ENCODE measurements at regions of chrX and their contacts with region 1.

Region 1: DNA sequence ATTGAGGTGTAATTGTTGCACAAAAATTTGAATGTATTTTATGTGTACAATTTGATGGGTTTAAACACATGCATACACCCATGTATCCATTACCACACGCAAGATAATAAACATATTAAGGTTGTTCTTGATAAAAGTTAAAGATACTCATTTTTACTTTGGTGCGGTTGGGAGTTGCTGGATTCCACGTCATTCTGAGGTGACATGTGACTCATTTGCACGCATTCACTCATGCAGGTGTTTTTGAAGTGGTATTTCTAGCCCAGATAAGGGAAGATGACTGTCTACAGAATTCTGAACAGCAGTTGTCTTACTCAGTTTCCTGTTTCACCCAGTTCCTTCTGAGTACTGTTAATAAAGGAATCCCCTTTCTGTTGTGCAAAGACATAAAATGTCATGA is 142.0 kb downstream of the RTL3 start:
- DNase-seq: peak; percentile 70
- ATAC-seq: peak; percentile 83
- H3K4me3 Mint-ChIP-seq: peak overlapping the region; percentile 23
- H3K27ac Mint-ChIP-seq: peak overlapping the region; percentile 84
- H3K4me1 Mint-ChIP-seq: peaks cover 48% of the 10 kb centered on the region
- H3K27me3 Mint-ChIP-seq: no peaks in the 10 kb centered on the region

Region 2: GRCh38 chrX:77962068-77962902 is 554.8 kb before region 1 on chrX:
- CTCF ChIA-PET with region 1: no interaction called
- POLR2A ChIA-PET with region 1: no interaction called
- intact Hi-C with region 1: loop called in 1 of 2 experiments (anchors 2 kb)
- DNase-seq: peak; percentile 16
- ATAC-seq: peak; percentile 54
- H3K4me3 Mint-ChIP-seq: peak overlapping the region; percentile 68
- H3K27ac Mint-ChIP-seq: peak overlapping the region; percentile 92
- H3K4me1 Mint-ChIP-seq: peaks cover 47% of the 10 kb centered on the region
- H3K27me3 Mint-ChIP-seq: no peaks in the 10 kb centered on the region

Region 3: DNA sequence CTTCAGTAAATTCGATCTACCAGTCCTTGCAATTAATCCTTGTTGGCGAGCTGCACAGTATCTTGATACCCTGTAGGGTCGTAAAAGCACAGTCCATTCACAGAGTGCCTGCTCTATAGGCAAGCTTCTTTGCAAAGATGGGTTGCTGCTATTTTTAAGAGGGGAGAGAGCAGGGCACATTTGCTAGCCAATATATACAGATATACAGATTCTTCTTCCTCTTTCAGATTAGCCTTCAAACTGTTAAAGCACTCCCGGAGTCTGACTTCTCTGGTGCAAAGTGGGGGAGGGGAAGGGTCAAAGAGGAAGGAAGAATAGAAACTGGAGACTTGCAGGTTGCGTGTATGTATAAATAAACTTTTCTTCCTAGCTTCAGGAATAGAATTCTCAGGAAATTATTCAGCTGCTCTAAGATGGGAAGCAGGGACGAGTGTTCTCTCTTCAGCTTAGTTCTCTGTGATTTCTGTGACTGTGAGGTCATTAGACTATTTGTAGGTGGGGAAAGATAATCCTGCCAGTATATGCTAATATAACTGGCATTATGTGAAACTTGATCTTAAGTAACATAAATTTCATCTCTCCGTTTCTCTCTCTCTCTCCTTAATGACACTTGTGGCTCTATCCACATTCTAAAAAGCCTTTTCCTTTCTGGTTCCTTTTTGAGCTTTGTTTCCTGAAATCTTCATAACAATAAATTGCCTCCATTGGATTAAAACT is 189.6 kb before region 1 on chrX and contains the start of gene CYSLTR1:
- CTCF ChIA-PET with region 1: no interaction called
- POLR2A ChIA-PET with region 1: no interaction called
- intact Hi-C with region 1: loop called (anchors 2 to 5 kb)
- DNase-seq: no peak
- ATAC-seq: no peak
- H3K4me3 Mint-ChIP-seq: peak within 1 kb of the TSS; percentile 74
- H3K27ac Mint-ChIP-seq: peak within 1 kb of the TSS; percentile 74
- H3K4me1 Mint-ChIP-seq: peaks cover 64% of the 10 kb centered on the region
- H3K27me3 Mint-ChIP-seq: no peaks in the 10 kb centered on the region
- total RNA-seq, gene CYSLTR1: 3.1 TPM

Region 4: DNA sequence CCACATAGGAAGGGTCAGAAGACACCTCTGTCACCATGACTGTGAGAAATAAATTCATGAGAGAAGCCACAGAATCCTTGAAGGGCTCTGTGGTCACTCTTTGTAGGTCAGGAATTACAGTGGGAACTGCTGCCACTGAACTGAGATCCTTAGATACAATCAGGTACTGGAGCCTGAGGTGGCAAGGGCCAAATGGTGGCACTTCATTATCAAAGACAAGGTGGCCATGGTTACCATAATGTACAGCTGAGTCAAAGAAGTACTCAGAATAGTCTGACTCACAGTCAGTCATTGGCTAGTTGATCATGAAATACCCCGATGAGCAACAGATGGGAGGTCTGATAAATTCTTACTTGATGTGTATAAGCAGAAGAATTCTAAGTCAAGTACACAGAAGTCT is 10.1 kb after region 1 on chrX:
- CTCF ChIA-PET with region 1: interaction called, 3 read pairs
- POLR2A ChIA-PET with region 1: interaction called, 3 read pairs
- intact Hi-C with region 1: loop called (anchors 1 kb)
- DNase-seq: peak; percentile 30
- ATAC-seq: peak; percentile 88
- H3K4me3 Mint-ChIP-seq: no peak overlapping the region
- H3K27ac Mint-ChIP-seq: no peak overlapping the region
- H3K4me1 Mint-ChIP-seq: peaks cover 20% of the 10 kb centered on the region
- H3K27me3 Mint-ChIP-seq: no peaks in the 10 kb centered on the region

Region 5: DNA sequence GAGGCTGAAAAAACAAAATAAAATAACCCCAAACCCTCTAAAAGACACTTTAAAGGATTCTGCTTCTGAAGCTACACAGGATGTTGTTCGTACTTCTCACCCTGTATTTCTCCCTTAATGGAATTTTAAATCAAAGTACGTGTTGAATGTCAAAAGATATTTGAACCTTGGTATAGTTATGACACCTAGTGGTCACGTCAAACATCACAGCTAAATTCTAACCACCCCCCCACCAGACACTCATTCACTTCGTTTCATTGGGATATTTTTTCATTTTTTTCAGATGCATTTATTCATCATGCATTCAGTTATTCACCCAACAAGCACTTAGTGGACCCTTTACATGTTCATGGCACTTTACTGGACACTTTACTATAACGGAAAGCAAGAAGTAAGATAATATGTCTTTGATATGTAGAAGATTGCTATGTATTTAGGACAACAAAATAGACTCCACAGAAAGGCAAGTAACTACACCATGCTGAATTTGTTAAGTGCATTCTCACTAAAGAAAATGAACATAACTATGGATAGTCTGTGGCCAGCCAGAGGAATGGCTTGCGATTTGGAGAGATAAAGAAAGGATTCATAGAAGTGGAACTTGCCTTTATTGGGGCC is 564.9 kb after region 1 on chrX:
- CTCF ChIA-PET with region 1: no interaction called
- POLR2A ChIA-PET with region 1: no interaction called
- intact Hi-C with region 1: loop called in 1 of 2 experiments (anchors 2 kb)
- DNase-seq: peak; percentile 29
- ATAC-seq: peak; percentile 53
- H3K4me3 Mint-ChIP-seq: peak overlapping the region; percentile 47
- H3K27ac Mint-ChIP-seq: peak overlapping the region; percentile 71
- H3K4me1 Mint-ChIP-seq: peaks cover 37% of the 10 kb centered on the region
- H3K27me3 Mint-ChIP-seq: no peaks in the 10 kb centered on the region

Region 6: DNA sequence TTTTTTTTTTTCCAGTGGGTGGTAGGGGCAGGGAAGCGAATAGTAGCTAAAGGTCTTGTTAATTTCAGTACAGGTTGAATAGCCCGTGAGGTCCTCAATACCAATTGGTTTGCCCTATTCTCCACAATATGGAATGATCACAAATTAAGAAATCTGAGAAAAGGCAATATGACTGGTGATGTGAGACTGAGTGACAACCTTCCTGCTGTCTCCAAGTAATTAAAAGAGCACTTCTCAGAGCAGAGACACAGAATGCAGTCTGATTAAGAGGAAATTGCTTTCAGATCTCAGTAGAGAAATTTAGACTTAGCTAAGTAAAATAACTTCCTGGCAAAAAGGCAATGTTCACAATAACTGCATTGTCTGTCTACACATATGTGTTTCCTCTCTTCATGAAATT is 650.3 kb after region 1 on chrX:
- CTCF ChIA-PET with region 1: no interaction called
- POLR2A ChIA-PET with region 1: no interaction called
- intact Hi-C with region 1: loop called in 1 of 2 experiments (anchors 5 kb)
- DNase-seq: no peak
- ATAC-seq: peak; percentile 38
- H3K4me3 Mint-ChIP-seq: peak overlapping the region; percentile 64
- H3K27ac Mint-ChIP-seq: peak overlapping the region; percentile 87
- H3K4me1 Mint-ChIP-seq: peaks cover 81% of the 10 kb centered on the region
- H3K27me3 Mint-ChIP-seq: no peaks in the 10 kb centered on the region

Measured in activated CD4-positive, alpha-beta T cell treated with anti-CD3 and anti-CD28 coated beads for 36 hours (primary cell).